CD8-positive, alpha-beta T cell (primary cell): ENCODE measurements at regions of chr17 and their contacts with region 1.

Region 1: DNA sequence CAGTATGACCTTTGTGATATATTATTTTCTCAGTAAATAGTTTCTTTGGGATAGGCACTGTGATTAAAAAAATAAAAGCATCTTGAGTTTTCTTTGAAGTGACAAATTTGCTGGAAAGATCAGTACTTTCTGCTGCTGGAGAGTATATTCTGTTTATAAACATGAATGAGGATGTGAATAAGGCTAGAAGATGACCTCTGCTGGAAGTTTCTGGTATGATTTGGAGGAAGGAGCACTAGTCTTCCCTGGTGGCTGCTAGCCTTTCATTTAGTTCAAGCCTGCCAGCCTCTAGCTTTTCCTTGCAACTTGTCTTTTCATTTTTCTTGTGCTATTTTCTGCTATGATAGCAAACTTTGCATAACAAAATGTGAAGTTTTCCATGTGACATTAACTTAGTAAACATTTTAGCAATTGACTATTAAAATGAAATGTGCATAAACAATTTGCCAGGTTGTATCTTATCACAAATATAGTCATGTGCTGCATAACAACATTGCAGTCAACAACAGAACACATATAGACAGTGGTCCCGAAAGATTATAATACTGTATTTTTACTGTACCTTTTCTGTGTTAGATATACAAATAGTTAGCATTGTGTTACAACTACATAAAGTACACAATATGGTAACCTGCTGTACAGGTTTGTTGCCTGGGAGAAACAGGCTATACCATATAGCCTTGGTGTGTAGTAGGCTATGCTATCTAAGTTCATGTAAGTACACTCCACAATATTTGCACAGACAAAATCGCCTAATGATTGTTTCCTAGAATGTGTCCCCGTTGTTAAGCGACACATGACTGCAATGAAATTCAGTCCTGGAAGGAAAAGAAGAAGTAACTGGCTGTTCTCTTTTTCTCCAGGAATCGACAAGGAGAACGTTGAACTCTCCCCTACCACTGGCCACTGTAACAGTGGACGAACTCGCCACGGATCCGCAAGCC is 18.1 kb upstream of the RAB11FIP4 start:
- DNase-seq: peak in 3 of 9 experiments; percentile 29 to 76 (median 65)
- ATAC-seq: peak; percentile 84
- H3K4me3 ChIP-seq: no peak overlapping the region
- H3K4me3 Mint-ChIP-seq: no peak overlapping the region
- H3K27ac ChIP-seq: no peak overlapping the region
- H3K27ac Mint-ChIP-seq: no peak overlapping the region
- H3K4me1 ChIP-seq: no peaks in the 10 kb centered on the region
- H3K4me1 Mint-ChIP-seq: peaks cover 14% of the 10 kb centered on the region
- H3K27me3 ChIP-seq: no peaks in the 10 kb centered on the region
- H3K27me3 Mint-ChIP-seq: no peaks in the 10 kb centered on the region
- CTCF ChIP-seq: peak; percentile 91

Region 2: GRCh38 chr17:30848021-30848420 is 525.4 kb before region 1 on chr17:
- CTCF ChIA-PET with region 1: no interaction called
- POLR2A ChIA-PET with region 1: no interaction called
- intact Hi-C with region 1: no loop called
- DNase-seq: no peak
- ATAC-seq: no peak
- H3K4me3 ChIP-seq: no peak overlapping the region
- H3K4me3 Mint-ChIP-seq: no peak overlapping the region
- H3K27ac ChIP-seq: no peak overlapping the region
- H3K27ac Mint-ChIP-seq: no peak overlapping the region
- H3K4me1 ChIP-seq: no peaks in the 10 kb centered on the region
- H3K4me1 Mint-ChIP-seq: no peaks in the 10 kb centered on the region
- H3K27me3 ChIP-seq: no peaks in the 10 kb centered on the region
- H3K27me3 Mint-ChIP-seq: no peaks in the 10 kb centered on the region
- CTCF ChIP-seq: no peak

Region 3: DNA sequence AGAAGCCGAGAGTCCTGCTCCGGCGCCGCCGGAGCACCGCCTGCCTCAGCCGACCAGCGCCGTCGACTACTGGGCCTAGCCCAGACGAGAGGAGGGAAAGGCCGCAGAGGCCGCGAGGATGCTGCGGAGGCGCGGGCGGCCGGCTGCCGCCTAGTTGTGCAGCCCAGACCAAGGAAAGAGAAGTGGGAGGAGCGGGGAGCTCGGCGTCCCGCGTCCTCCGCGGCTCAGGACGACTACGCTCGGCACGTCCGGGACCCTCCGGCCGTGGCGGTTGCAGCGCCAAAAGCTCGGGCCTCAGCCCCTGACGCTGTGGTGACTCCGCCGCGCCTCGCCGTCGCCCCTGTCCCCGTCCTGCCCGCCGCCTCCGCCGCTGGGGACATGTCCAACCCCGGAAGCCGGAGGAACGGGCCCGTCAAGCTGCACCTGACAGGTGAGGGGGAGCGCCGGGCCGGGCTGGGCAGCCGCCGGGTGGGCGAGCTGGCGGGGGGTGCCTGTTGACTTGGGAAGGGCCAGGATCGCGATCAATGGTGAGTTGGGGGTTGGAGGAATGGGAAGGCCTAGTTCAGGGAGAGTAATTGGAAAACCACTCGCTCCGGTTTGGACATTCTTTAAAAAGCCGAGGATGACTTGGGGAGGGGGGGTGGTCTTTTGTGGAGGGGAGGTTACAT is 364.9 kb before region 1 on chr17:
- CTCF ChIA-PET with region 1: interaction called, 4 read pairs
- POLR2A ChIA-PET with region 1: no interaction called
- intact Hi-C with region 1: loop called (anchors 1 to 2 kb)
- DNase-seq: peak in 8 of 9 experiments; percentile 37 to 76 (median 54)
- ATAC-seq: peak; percentile 69
- H3K4me3 ChIP-seq: peak overlapping the region; percentile 61 to 70
- H3K4me3 Mint-ChIP-seq: peak overlapping the region; percentile 90
- H3K27ac ChIP-seq: peak overlapping the region; percentile 47 to 49
- H3K27ac Mint-ChIP-seq: peak overlapping the region; percentile 78
- H3K4me1 ChIP-seq: peaks cover 6% of the 10 kb centered on the region
- H3K4me1 Mint-ChIP-seq: peaks cover 15% of the 10 kb centered on the region
- H3K27me3 ChIP-seq: no peaks in the 10 kb centered on the region
- H3K27me3 Mint-ChIP-seq: peaks cover 14% of the 10 kb centered on the region
- CTCF ChIP-seq: no peak

Region 4: GRCh38 chr17:31015639-31016038 is 357.8 kb before region 1 on chr17:
- CTCF ChIA-PET with region 1: interaction called, 4 read pairs
- POLR2A ChIA-PET with region 1: no interaction called
- intact Hi-C with region 1: loop called (anchors 1 to 2 kb)
- DNase-seq: no peak
- ATAC-seq: no peak
- H3K4me3 ChIP-seq: no peak overlapping the region
- H3K4me3 Mint-ChIP-seq: no peak overlapping the region
- H3K27ac ChIP-seq: no peak overlapping the region
- H3K27ac Mint-ChIP-seq: no peak overlapping the region
- H3K4me1 ChIP-seq: no peaks in the 10 kb centered on the region
- H3K4me1 Mint-ChIP-seq: no peaks in the 10 kb centered on the region
- H3K27me3 ChIP-seq: no peaks in the 10 kb centered on the region
- H3K27me3 Mint-ChIP-seq: peaks cover 2% of the 10 kb centered on the region
- CTCF ChIP-seq: no peak

Region 5: GRCh38 chr17:31216053-31216751 is 157.2 kb before region 1 on chr17:
- CTCF ChIA-PET with region 1: interaction called, 8 read pairs
- POLR2A ChIA-PET with region 1: no interaction called
- intact Hi-C with region 1: loop called (anchors 1 to 5 kb)
- DNase-seq: peak in 2 of 9 experiments; percentile 43 to 61
- ATAC-seq: no peak
- H3K4me3 ChIP-seq: no peak overlapping the region
- H3K4me3 Mint-ChIP-seq: no peak overlapping the region
- H3K27ac ChIP-seq: no peak overlapping the region
- H3K27ac Mint-ChIP-seq: no peak overlapping the region
- H3K4me1 ChIP-seq: no peaks in the 10 kb centered on the region
- H3K4me1 Mint-ChIP-seq: no peaks in the 10 kb centered on the region
- H3K27me3 ChIP-seq: no peaks in the 10 kb centered on the region
- H3K27me3 Mint-ChIP-seq: no peaks in the 10 kb centered on the region
- CTCF ChIP-seq: peak; percentile 65

Region 6: GRCh38 chr17:31269578-31269983 is 103.8 kb before region 1 on chr17:
- CTCF ChIA-PET with region 1: interaction called, 40 read pairs
- POLR2A ChIA-PET with region 1: no interaction called
- intact Hi-C with region 1: loop called (anchors 1 kb)
- DNase-seq: no peak
- ATAC-seq: no peak
- H3K4me3 ChIP-seq: no peak overlapping the region
- H3K4me3 Mint-ChIP-seq: no peak overlapping the region
- H3K27ac ChIP-seq: no peak overlapping the region
- H3K27ac Mint-ChIP-seq: no peak overlapping the region
- H3K4me1 ChIP-seq: no peaks in the 10 kb centered on the region
- H3K4me1 Mint-ChIP-seq: no peaks in the 10 kb centered on the region
- H3K27me3 ChIP-seq: no peaks in the 10 kb centered on the region
- H3K27me3 Mint-ChIP-seq: no peaks in the 10 kb centered on the region
- CTCF ChIP-seq: no peak

Region 7: GRCh38 chr17:31313982-31314784 is 59.2 kb before region 1 on chr17 and contains the start of gene EVI2B:
- CTCF ChIA-PET with region 1: interaction called, 12 read pairs
- POLR2A ChIA-PET with region 1: interaction called, 3 read pairs
- intact Hi-C with region 1: loop called in 1 of 2 experiments (anchors 2 kb)
- DNase-seq: peak in 3 of 9 experiments; percentile 29 to 75 (median 59)
- ATAC-seq: peak; percentile 44
- H3K4me3 ChIP-seq: peak within 1 kb of the TSS; percentile 59 to 67
- H3K4me3 Mint-ChIP-seq: peak within 1 kb of the TSS; percentile 82
- H3K27ac ChIP-seq: peak within 1 kb of the TSS; percentile 50 to 89
- H3K27ac Mint-ChIP-seq: peak within 1 kb of the TSS; percentile 90
- H3K4me1 ChIP-seq: peaks cover 40% of the 10 kb centered on the region
- H3K4me1 Mint-ChIP-seq: peaks cover 52% of the 10 kb centered on the region
- H3K27me3 ChIP-seq: no peaks in the 10 kb centered on the region
- H3K27me3 Mint-ChIP-seq: no peaks in the 10 kb centered on the region
- CTCF ChIP-seq: no peak
- total RNA-seq, gene EVI2B: 77.5 to 82.0 TPM

Region 8: GRCh38 chr17:31339906-31340661 is 33.3 kb before region 1 on chr17:
- CTCF ChIA-PET with region 1: interaction called, 10 read pairs
- POLR2A ChIA-PET with region 1: no interaction called
- intact Hi-C with region 1: no loop called
- DNase-seq: no peak
- ATAC-seq: no peak
- H3K4me3 ChIP-seq: no peak overlapping the region
- H3K4me3 Mint-ChIP-seq: no peak overlapping the region
- H3K27ac ChIP-seq: no peak overlapping the region
- H3K27ac Mint-ChIP-seq: no peak overlapping the region
- H3K4me1 ChIP-seq: no peaks in the 10 kb centered on the region
- H3K4me1 Mint-ChIP-seq: no peaks in the 10 kb centered on the region
- H3K27me3 ChIP-seq: no peaks in the 10 kb centered on the region
- H3K27me3 Mint-ChIP-seq: no peaks in the 10 kb centered on the region
- CTCF ChIP-seq: no peak

Region 9: DNA sequence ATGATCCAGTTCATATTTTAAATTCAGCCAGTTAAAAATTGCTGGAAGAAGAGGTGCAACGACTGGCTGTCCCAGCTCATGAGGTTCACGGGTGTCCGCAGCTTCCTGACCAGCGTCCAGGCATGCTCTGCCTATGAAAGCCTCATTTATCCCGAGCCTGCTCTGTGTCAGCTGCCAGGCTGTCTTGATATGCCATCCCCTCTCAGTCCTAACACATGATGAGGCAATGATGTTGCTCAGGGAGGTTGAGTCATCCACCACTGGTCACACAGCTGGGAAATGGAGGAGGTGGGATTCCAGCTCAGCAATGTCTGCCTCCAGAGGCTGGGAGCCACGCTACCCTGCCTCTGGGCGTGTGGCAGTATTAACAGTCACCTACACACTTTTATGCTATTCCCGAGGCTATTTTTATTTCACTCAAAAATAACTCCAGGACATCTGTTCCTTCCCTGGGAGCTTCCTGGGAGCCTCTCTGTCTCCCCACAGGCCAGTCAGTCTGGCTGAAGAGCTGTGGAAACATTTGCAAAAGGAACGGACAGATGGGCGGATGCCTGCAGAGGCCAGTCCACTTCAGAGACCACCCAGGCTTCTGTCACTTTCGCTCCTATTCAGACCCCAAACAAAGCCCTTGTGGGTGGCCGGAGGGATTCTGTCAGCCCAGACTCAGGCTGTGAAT is 40.6 kb after region 1 on chr17:
- CTCF ChIA-PET with region 1: no interaction called
- POLR2A ChIA-PET with region 1: no interaction called
- intact Hi-C with region 1: no loop called
- DNase-seq: no peak
- ATAC-seq: no peak
- H3K4me3 ChIP-seq: no peak overlapping the region
- H3K4me3 Mint-ChIP-seq: no peak overlapping the region
- H3K27ac ChIP-seq: no peak overlapping the region
- H3K27ac Mint-ChIP-seq: no peak overlapping the region
- H3K4me1 ChIP-seq: no peaks in the 10 kb centered on the region
- H3K4me1 Mint-ChIP-seq: no peaks in the 10 kb centered on the region
- H3K27me3 ChIP-seq: no peaks in the 10 kb centered on the region
- H3K27me3 Mint-ChIP-seq: no peaks in the 10 kb centered on the region
- CTCF ChIP-seq: no peak